CD4-positive, alpha-beta memory T cell (primary cell): ENCODE measurements at regions of chr2 and their contacts with region 1.

Region 1: DNA sequence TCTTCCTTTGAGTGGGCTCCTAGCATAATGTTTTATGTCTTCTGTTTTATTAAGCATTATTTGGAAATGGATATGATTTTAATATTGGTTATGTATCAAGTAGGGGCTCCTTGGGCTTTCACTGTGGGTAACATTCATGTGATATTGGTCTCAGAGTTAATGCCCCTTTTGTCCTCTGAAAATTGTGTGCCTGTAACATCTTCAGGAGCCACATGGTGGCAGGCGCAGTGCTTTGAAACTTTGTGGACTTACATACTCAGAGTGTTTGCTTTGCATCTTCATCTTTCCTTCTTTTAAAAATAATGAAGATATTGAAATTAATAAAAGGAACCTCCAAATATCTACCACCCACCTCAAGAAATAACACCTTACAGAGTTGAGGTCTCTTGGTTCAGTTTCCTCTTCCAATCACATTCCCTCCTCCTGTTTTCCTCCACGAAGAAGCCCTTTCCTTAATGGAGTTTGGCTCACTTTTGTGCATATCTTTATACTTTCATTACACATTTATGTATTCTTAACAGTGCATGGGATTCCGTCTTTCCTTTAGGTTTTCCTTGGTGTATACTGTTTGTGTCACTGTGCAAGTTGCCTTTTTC is 73.5 kb downstream of the LIMS1 start:
- DNase-seq: peak; percentile 56 to 65 (median 61)
- H3K4me3 ChIP-seq: no peak overlapping the region
- H3K4me3 Mint-ChIP-seq: peak overlapping the region in 1 of 8 donors; percentile 33
- H3K27ac ChIP-seq: no peak overlapping the region
- H3K27ac Mint-ChIP-seq: peak overlapping the region in 2 of 7 donors; percentile 19 to 39
- H3K4me1 ChIP-seq: peaks cover 47% of the 10 kb centered on the region
- H3K4me1 Mint-ChIP-seq: peaks cover 33 to 48% (median 39%) of the 10 kb centered on the region in 4 donors
- H3K27me3 ChIP-seq: no peaks in the 10 kb centered on the region
- H3K27me3 Mint-ChIP-seq: no peaks in the 10 kb centered on the region

Region 2: DNA sequence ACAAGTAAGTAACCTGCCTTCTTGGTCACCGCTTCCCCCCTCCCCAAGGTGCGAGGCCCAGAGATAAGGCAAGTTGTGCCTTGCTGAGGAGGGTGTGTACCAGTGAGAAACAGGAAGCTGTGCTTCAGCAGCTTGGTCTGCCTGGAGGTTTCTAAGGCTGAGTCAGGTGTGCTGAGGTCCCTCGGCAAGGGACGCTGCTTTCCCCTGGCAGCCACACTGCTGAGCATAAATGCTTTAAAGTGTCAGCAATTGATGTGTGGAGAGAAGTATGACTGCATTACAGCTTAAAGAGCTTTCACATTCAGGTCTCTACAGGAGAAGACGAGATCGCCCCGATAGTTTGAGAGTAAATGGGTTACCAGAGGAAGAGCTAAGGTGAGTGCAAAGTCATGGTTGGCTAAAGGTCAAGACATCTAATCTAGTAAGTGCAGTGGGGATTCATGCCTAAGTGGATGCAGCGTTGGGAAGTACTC is 13.3 kb after region 1 on chr2:
- CTCF ChIA-PET with region 1: interaction called, 545 read pairs
- POLR2A ChIA-PET with region 1: interaction called, 704 read pairs
- intact Hi-C with region 1: loop called (anchors 1 kb)
- DNase-seq: peak; percentile 79 to 92 (median 84)
- H3K4me3 ChIP-seq: peak overlapping the region; percentile 65 to 86
- H3K4me3 Mint-ChIP-seq: peak overlapping the region; percentile 91 to 97 (median 92)
- H3K27ac ChIP-seq: peak overlapping the region; percentile 69
- H3K27ac Mint-ChIP-seq: peak overlapping the region; percentile 91 to 98 (median 96)
- H3K4me1 ChIP-seq: peaks cover 88% of the 10 kb centered on the region
- H3K4me1 Mint-ChIP-seq: peaks cover 52 to 86% (median 66%) of the 10 kb centered on the region in 4 donors
- H3K27me3 ChIP-seq: no peaks in the 10 kb centered on the region
- H3K27me3 Mint-ChIP-seq: no peaks in the 10 kb centered on the region

Region 3: DNA sequence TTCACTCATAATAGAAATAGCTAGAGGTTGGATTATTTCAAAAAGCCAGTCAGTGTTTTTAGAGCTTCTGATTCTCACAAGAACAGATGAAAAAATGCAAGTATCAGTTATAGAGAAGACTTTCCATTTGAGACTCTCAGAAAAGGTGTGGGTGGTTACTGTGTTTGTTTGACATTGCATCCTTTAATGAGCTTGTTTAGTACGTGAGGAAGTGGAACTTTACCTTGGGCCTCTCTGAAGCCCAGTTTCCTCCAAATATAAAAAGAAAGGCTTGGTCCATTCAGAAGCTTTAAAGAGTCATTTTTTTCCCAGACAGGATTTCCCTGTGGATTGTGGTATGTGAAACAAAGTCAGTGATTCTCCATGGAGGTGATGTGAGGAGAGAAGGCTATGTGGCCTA is 21.6 kb after region 1 on chr2:
- CTCF ChIA-PET with region 1: interaction called, 545 read pairs
- POLR2A ChIA-PET with region 1: interaction called, 704 read pairs
- intact Hi-C with region 1: loop called (anchors 2 kb)
- DNase-seq: peak in 1 of 5 donors; percentile 39
- H3K4me3 ChIP-seq: no peak overlapping the region
- H3K4me3 Mint-ChIP-seq: peak overlapping the region; percentile 37 to 88 (median 74)
- H3K27ac ChIP-seq: peak overlapping the region; percentile 14
- H3K27ac Mint-ChIP-seq: peak overlapping the region; percentile 49 to 94 (median 89)
- H3K4me1 ChIP-seq: peaks cover 96% of the 10 kb centered on the region
- H3K4me1 Mint-ChIP-seq: peaks cover 69 to 94% (median 82%) of the 10 kb centered on the region in 4 donors
- H3K27me3 ChIP-seq: no peaks in the 10 kb centered on the region
- H3K27me3 Mint-ChIP-seq: no peaks in the 10 kb centered on the region

Region 4: DNA sequence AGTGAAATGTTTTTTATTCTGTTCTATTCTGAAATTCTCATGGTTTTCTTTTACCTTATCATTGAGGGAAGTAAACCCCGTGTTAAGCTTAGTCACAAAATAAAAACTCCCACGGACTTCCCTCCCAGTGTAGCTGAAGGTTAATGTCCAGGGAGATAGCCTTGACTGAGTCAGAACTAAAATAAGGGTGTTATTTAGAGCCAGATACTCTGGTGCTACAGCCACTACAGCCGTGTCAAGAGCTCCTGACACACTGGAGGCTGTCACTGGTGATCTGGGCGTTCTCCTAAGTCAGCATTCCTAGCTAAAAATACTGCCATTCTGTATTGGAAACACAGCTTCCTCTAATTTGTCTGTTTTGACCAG is 29.5 kb after region 1 on chr2:
- CTCF ChIA-PET with region 1: interaction called, 545 read pairs
- POLR2A ChIA-PET with region 1: interaction called, 704 read pairs
- intact Hi-C with region 1: loop called (anchors 1 kb)
- DNase-seq: no peak
- H3K4me3 ChIP-seq: no peak overlapping the region
- H3K4me3 Mint-ChIP-seq: no peak overlapping the region
- H3K27ac ChIP-seq: no peak overlapping the region
- H3K27ac Mint-ChIP-seq: peak overlapping the region in 1 of 7 donors; percentile 48
- H3K4me1 ChIP-seq: peaks cover 78% of the 10 kb centered on the region
- H3K4me1 Mint-ChIP-seq: peaks cover 55 to 86% (median 66%) of the 10 kb centered on the region in 4 donors
- H3K27me3 ChIP-seq: no peaks in the 10 kb centered on the region
- H3K27me3 Mint-ChIP-seq: no peaks in the 10 kb centered on the region

Region 5: DNA sequence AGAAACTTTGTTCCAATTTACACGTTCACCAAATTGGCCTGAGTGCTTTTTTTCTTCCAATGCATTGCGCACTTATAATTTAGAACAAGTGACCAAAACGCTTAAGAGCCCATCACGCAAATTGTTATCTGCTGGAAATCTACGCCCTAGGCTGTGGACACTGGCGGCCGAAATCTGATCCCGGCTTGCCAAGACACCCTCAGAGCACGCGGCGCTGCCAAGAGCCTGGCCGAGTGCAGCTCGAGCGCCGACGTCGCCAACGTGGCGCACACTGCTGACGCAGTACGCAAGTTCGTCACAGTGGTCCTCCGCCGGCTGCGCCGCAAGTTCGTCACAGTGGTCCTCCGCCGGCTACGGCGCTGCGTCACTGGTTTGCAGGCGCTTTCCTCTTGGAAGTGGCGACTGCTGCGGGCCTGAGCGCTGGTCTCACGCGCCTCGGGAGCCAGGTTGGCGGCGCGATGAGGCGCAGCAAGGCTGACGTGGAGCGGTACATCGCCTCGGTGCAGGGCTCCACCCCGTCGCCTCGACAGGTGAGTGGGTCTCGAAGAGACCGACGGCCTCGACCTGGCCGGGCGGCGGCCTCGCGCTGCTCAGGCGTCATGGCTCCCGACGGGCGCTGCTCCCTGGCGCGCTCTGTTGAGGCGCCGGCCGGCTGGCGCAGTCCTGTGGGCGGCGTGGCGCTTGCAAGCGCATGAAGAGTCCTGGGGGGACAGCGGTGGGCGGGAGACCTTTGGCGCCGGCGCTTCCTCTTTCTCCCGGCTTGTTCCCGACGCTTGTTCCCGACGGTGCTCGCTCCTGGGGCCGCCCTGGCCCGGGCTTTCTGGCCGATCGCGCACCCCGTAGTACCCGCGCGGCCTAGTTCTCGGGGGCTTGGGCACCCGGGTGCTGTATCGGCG is 111.6 kb after region 1 on chr2 and contains the start of gene RANBP2:
- CTCF ChIA-PET with region 1: interaction called, 5 read pairs
- POLR2A ChIA-PET with region 1: interaction called, 3 read pairs
- intact Hi-C with region 1: loop called (anchors 5 kb)
- DNase-seq: peak; percentile 92 to 95 (median 95)
- H3K4me3 ChIP-seq: peak within 1 kb of the TSS; percentile 15 to 86
- H3K4me3 Mint-ChIP-seq: peak within 1 kb of the TSS; percentile 93 to 98 (median 96)
- H3K27ac ChIP-seq: peak within 1 kb of the TSS; percentile 95
- H3K27ac Mint-ChIP-seq: peak within 1 kb of the TSS; percentile 98 to 100 (median 99)
- H3K4me1 ChIP-seq: peaks cover 27% of the 10 kb centered on the region
- H3K4me1 Mint-ChIP-seq: peaks cover 14 to 43% (median 27%) of the 10 kb centered on the region in 4 donors
- H3K27me3 ChIP-seq: no peaks in the 10 kb centered on the region
- H3K27me3 Mint-ChIP-seq: no peaks in the 10 kb centered on the region
- total RNA-seq, gene RANBP2: 89.8 to 102 TPM

Region 6: GRCh38 chr2:108971661-108972566 is 364.1 kb after region 1 on chr2:
- CTCF ChIA-PET with region 1: no interaction called
- POLR2A ChIA-PET with region 1: no interaction called
- intact Hi-C with region 1: no loop called
- DNase-seq: no peak
- H3K4me3 ChIP-seq: no peak overlapping the region
- H3K4me3 Mint-ChIP-seq: peak overlapping the region in 5 of 8 donors; percentile 1 to 53 (median 34)
- H3K27ac ChIP-seq: no peak overlapping the region
- H3K27ac Mint-ChIP-seq: peak overlapping the region in 4 of 7 donors; percentile 13 to 55 (median 42)
- H3K4me1 ChIP-seq: peaks cover 26% of the 10 kb centered on the region
- H3K4me1 Mint-ChIP-seq: peaks cover 28 to 81% (median 58%) of the 10 kb centered on the region in 4 donors
- H3K27me3 ChIP-seq: no peaks in the 10 kb centered on the region
- H3K27me3 Mint-ChIP-seq: no peaks in the 10 kb centered on the region

Region 7: DNA sequence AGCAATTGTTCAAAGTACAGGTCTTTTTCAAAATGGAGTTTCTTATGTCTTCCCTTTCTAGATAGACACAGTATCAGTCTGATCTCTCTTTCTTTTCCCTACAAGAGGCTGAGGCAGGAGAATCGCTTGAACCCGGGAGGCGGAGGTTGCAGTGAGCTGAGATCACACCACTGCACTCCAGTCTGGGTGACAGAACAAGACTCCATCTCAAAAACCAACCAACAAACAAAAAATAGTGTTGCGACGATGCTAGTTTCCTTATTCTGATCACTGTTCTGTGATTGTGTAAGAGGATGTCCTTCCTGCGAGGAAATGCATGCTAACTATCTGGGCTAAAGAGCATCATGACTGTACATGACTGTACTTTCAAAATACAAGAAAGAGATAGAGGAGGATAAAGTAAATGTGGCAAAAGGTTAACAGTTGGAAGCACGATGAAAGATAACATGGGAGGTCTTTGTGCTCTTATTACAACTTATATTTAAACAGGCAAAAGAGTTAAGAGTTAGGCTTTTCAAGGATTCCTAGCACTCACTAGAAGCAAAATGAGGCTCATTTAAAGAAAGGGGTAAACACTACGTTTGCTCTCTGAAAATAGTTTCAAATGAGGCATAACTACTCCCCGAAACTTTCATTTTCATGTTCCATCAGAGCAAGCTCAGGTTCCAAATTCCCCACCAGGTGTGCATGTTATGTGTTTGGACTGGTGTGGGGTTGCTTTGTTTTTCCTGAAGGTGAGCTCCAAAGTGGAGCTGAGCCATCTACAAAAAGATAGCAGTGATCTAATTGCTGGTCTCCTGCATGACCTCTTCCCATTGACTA is 1030.2 kb after region 1 on chr2:
- CTCF ChIA-PET with region 1: no interaction called
- POLR2A ChIA-PET with region 1: no interaction called
- intact Hi-C with region 1: no loop called
- DNase-seq: peak in 2 of 5 donors; percentile 4 to 10
- H3K4me3 ChIP-seq: no peak overlapping the region
- H3K4me3 Mint-ChIP-seq: peak overlapping the region in 5 of 8 donors; percentile 20 to 49 (median 35)
- H3K27ac ChIP-seq: no peak overlapping the region
- H3K27ac Mint-ChIP-seq: peak overlapping the region in 5 of 7 donors; percentile 20 to 68 (median 48)
- H3K4me1 ChIP-seq: peaks cover 14% of the 10 kb centered on the region
- H3K4me1 Mint-ChIP-seq: peaks cover 5 to 16% (median 6%) of the 10 kb centered on the region in 4 donors
- H3K27me3 ChIP-seq: no peaks in the 10 kb centered on the region
- H3K27me3 Mint-ChIP-seq: peaks cover 0 to 2% of the 10 kb centered on the region in 2 donors